Activated naive CD4-positive, alpha-beta T cell treated with anti-CD3 and anti-CD28 coated beads for 36 hours (primary cell): ENCODE measurements at regions of chr19 and their contacts with region 1.

Region 1: GRCh38 chr19:38402967-38403861 is at the start of gene FAM98C:
- DNase-seq: peak; percentile 98
- H3K4me3 Mint-ChIP-seq: peak within 1 kb of the TSS; percentile 90
- H3K27ac Mint-ChIP-seq: peak within 1 kb of the TSS; percentile 84
- H3K4me1 Mint-ChIP-seq: peaks cover 15% of the 10 kb centered on the region
- H3K27me3 Mint-ChIP-seq: no peaks in the 10 kb centered on the region
- total RNA-seq, gene FAM98C: 21.5 to 27.0 TPM

Region 2: GRCh38 chr19:38374429-38375176 is 28.6 kb before region 1 on chr19 and contains the start of gene PSMD8:
- CTCF ChIA-PET with region 1: interaction called, 9 read pairs
- intact Hi-C with region 1: loop called (anchors 1 kb)
- DNase-seq: peak; percentile 100
- H3K4me3 Mint-ChIP-seq: peak within 1 kb of the TSS; percentile 98
- H3K27ac Mint-ChIP-seq: peak within 1 kb of the TSS; percentile 93
- H3K4me1 Mint-ChIP-seq: peaks cover 32% of the 10 kb centered on the region
- H3K27me3 Mint-ChIP-seq: no peaks in the 10 kb centered on the region
- total RNA-seq, gene PSMD8: 194 to 204 TPM

Region 3: DNA sequence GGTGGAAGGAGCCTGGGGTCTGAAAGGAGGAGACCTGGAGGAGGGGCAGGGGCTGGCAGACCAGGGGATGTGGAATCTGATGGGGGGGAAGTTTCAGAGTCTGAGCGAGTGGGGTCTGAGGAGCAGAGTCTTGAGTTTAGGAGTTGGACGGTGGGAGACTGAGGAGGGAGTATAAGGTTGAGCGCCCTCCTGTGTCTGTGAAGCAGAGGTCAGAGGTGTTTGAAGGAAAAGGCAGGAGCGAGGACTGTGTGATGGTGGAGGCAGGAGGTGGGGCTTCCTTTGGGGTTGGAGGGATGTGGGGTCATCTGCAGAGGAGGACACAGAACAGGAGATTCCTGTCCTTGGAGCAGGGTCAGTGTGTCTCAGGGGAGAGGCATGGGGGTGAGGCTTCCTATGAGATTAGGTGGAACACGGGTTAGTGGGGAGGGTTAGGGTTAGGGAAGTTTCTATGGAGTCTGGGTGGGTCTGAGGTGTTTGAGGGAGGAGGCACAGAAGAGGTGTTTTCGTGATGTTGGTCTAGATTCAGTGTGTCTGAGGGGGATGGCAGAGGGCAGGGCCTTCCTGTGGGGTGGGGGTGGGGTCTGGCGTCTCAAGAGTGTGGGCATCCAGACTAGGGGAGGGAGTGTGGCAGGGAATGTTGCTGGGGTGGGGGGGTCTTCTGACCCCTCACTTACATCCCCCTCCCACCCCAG is 38.6 kb after region 1 on chr19:
- CTCF ChIA-PET with region 1: interaction called, 5 read pairs
- intact Hi-C with region 1: loop called (anchors 1 kb)
- DNase-seq: peak; percentile 32
- H3K4me3 Mint-ChIP-seq: no peak overlapping the region
- H3K27ac Mint-ChIP-seq: no peak overlapping the region
- H3K4me1 Mint-ChIP-seq: no peaks in the 10 kb centered on the region
- H3K27me3 Mint-ChIP-seq: peaks cover 15% of the 10 kb centered on the region

Region 4: GRCh38 chr19:38634757-38635482 is 231.7 kb after region 1 on chr19:
- CTCF ChIA-PET with region 1: interaction called, 7 read pairs
- intact Hi-C with region 1: loop called (anchors 1 kb)
- DNase-seq: peak; percentile 80
- H3K4me3 Mint-ChIP-seq: no peak overlapping the region
- H3K27ac Mint-ChIP-seq: no peak overlapping the region
- H3K4me1 Mint-ChIP-seq: peaks cover 29% of the 10 kb centered on the region
- H3K27me3 Mint-ChIP-seq: no peaks in the 10 kb centered on the region